WTC11 (cell line): ENCODE measurements at regions of chr4 and their contacts with region 1.

Region 1: DNA sequence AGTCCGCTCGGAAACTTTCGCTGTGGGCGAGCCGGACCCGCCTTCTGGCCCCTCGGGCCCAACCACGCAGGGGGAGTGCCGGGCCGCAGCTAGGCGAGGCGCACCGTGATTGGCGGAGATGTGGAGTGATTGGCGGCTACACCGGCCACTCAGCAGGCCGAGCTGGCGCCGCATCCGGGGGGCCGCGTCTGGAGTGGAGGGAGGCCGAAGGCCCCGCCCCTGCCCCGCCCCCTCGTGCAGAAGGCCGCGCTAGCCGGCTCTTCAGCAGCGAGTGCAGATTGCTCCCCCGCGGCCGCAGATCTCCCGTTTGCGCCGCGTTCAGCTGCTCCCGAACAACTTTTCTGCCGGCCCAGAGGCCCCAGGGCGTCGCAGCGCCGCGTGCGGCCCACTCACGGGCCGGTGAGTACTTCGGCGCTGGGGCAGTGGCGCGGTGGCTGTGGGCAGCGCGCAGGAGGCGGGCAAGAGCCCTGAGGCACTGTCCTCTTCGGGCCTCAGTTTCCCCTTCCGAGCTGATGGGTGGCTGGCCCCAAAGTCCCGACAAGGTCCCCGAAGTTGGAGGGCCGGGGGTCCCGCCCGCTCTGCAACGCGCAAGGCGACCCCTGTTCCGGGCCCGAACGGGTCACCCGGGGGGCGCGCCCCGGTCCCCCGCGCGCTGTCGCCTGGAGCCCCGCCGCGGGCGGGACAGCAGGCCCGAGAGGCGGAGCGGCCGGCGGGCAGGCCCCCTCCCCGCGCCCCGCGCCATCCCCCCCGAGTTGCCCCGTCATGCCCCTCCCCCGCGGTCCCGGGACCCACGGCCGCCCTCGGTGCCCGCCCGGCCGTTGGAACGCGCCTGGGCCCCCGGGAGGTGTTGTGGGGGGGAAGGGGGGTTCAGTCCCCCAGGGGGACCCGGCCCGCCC is at the start of gene WFS1:
- DNase-seq: peak; percentile 99
- ATAC-seq: peak; percentile 99
- H3K4me3 Mint-ChIP-seq: peak within 1 kb of the TSS; percentile 81
- H3K27ac Mint-ChIP-seq: no peak within 1 kb of the TSS
- H3K4me1 Mint-ChIP-seq: peaks cover 54% of the 10 kb centered on the region
- H3K27me3 Mint-ChIP-seq: peaks cover 8% of the 10 kb centered on the region
- CTCF ChIP-seq: no peak
- total RNA-seq, gene WFS1: 33.0 to 35.8 TPM (median 34.7 TPM) in 3 replicates

Region 2: GRCh38 chr4:6298035-6298434 is 28.2 kb after region 1 on chr4:
- CTCF ChIA-PET with region 1: no interaction called
- POLR2A ChIA-PET with region 1: no interaction called
- DNase-seq: no peak
- ATAC-seq: no peak
- H3K4me3 Mint-ChIP-seq: no peak overlapping the region
- H3K27ac Mint-ChIP-seq: no peak overlapping the region; the same call in 1 of the 2 replicates
- H3K4me1 Mint-ChIP-seq: no peaks in the 10 kb centered on the region
- H3K27me3 Mint-ChIP-seq: no peaks in the 10 kb centered on the region
- CTCF ChIP-seq: no peak

Region 3: GRCh38 chr4:6308899-6309643 is 39.2 kb after region 1 on chr4:
- CTCF ChIA-PET with region 1: interaction called, 11 read pairs
- POLR2A ChIA-PET with region 1: no interaction called
- DNase-seq: peak; percentile 71
- ATAC-seq: peak; percentile 79
- H3K4me3 Mint-ChIP-seq: peak overlapping the region; percentile 69
- H3K27ac Mint-ChIP-seq: no peak overlapping the region
- H3K4me1 Mint-ChIP-seq: no peaks in the 10 kb centered on the region; the same call in 1 of the 2 replicates
- H3K27me3 Mint-ChIP-seq: peaks cover 31% of the 10 kb centered on the region
- CTCF ChIP-seq: no peak